ENCODE measurements at regions of chr4 and their contacts with region 1.

Region 1: GRCh38 chr4:182325397-182325796 is 82.2 kb downstream of the TENM3 start:
- DNase-seq: no peak
- H3K4me3 ChIP-seq: no peak overlapping the region
- H3K27ac ChIP-seq: no peak overlapping the region
- H3K4me1 ChIP-seq: no peaks in the 10 kb centered on the region
- H3K27me3 ChIP-seq: no peaks in the 10 kb centered on the region
- CTCF ChIP-seq: no peak

Region 2: DNA sequence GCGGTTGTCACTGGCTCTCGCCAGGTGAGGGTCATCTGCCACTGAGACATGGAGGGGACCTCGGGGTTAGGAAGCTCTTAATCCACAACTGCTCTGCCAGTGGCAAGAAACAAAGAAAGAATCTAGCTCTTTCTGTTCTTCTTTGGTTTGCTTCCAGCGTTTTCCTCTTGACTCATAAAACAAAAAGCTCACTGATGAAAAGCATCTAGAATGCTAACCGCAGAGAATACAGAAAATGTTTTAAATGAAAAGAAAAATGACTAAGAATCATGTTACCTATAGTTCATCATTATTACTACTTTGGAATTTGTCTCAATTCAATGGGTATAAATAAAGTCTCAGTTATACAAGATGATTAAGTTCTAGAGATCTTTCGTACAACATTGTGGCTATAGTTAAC is 357.0 kb before region 1 on chr4:
- CTCF ChIA-PET with region 1: interaction called, 11 read pairs
- dilution Hi-C with region 1: no loop called
- in situ Hi-C with region 1: no loop called
- intact Hi-C with region 1: no loop called
- DNase-seq: peak; percentile 77
- H3K4me3 ChIP-seq: no peak overlapping the region
- H3K27ac ChIP-seq: peak overlapping the region; percentile 81
- H3K4me1 ChIP-seq: peaks cover 57% of the 10 kb centered on the region
- H3K27me3 ChIP-seq: no peaks in the 10 kb centered on the region
- CTCF ChIP-seq: no peak